MCF 10A (cell line): ENCODE measurements at regions of chr13 and their contacts with region 1.

Region 1: DNA sequence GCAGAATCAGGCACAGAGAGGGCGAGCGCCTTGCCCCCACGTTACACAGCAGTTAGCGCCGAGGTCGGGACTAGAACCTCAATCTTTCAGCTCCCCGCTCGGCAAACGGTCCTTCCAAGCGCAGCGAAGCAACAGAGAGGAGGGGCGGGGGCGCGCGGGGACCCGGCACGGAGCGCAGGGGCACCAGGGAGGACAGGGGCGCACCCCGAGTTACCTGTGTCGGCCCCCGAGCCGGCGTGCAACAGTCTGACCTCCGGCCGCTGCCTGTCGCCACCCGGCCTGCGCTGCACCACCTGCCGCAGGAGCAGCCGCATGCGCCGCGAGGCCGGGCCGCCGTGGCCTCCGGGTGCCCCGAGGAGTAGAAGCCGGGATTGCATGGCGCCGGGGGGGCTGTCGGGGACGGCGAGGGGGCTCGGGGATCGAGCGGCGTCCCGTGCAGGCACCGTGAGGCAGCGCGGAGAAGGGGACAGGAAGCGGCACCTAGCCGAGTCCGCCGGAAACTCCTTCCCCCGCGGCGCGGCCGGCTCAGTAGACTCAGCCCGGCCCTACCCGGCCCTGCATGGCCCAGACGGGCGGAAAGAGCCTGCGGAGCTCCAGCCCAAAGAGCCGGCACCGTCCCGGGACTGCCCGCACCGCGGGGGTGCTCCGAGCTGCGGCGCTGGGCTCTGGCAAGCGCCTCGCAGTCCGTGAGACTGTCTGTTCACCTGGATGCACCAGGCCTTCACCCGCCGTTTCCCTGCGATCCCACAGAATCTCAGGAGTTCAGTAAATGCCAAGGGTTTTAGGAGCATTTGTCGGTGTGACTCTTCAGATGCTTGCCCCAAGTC is at the start of gene VWA8:
- DNase-seq: peak; percentile 73
- H3K4me3 Mint-ChIP-seq: peak within 1 kb of the TSS; percentile 86
- H3K27ac Mint-ChIP-seq: peak within 1 kb of the TSS; percentile 90
- H3K4me1 Mint-ChIP-seq: peaks cover 23% of the 10 kb centered on the region
- H3K27me3 Mint-ChIP-seq: no peaks in the 10 kb centered on the region
- CTCF ChIP-seq: no peak
- total RNA-seq, gene VWA8: 20.1 and 21.4 TPM in 2 replicates

Region 2: GRCh38 chr13:41916173-41916954 is 44.5 kb before region 1 on chr13:
- CTCF ChIA-PET with region 1: interaction called, 3 read pairs
- POLR2A ChIA-PET with region 1: interaction called, 13 read pairs
- intact Hi-C with region 1: no loop called
- DNase-seq: peak; percentile 75
- H3K4me3 Mint-ChIP-seq: peak overlapping the region; percentile 41
- H3K27ac Mint-ChIP-seq: peak overlapping the region; percentile 90
- H3K4me1 Mint-ChIP-seq: peaks cover 17% of the 10 kb centered on the region
- H3K27me3 Mint-ChIP-seq: no peaks in the 10 kb centered on the region
- CTCF ChIP-seq: no peak

Region 3: DNA sequence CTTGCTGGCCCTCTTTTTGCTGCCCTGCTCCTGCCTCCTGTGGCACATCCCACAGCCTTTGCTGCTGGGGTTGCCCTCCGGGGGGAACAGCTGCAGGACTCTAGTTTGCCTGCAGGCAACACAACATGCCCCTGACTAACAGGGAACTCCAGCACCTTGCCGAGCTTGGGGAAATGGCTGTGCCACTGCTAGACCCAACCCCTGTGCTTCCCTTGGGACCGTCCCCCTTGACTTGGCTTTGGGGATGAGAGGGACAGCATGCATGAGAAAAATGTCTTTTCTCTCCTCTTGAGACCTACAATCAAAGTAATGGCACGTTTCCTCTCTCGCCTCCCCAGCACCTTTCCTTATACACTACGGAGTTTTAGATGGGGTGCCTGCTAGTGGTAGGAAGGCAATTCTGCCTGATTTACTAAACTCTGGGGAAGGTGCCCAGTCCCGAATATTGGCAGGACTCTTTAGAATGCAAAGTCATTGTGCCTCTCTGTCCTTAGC is 12.4 kb after region 1 on chr13:
- CTCF ChIA-PET with region 1: interaction called, 5 read pairs
- POLR2A ChIA-PET with region 1: interaction called, 51 read pairs
- intact Hi-C with region 1: no loop called
- DNase-seq: no peak
- H3K4me3 Mint-ChIP-seq: no peak overlapping the region
- H3K27ac Mint-ChIP-seq: no peak overlapping the region
- H3K4me1 Mint-ChIP-seq: peaks cover 9% of the 10 kb centered on the region
- H3K27me3 Mint-ChIP-seq: no peaks in the 10 kb centered on the region
- CTCF ChIP-seq: no peak

Region 4: DNA sequence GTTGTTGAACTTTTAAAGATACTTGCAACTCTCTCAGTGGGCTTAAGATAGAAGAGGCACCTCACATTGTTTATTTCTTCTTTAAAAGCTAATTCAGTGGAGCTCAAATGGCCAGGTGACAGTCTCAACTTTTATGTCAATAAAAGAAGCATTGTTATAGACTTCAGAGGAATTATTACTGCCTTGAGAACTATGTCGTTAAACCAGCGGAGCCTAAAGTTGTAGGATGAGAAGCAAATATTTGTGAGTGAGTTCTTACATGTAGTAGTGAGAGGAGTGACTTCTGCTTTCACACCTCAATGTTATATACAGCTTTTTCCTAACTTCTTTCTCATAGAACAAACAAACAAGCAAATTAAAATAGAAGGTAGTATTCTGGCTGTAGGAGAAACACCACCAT is 56.4 kb after region 1 on chr13:
- CTCF ChIA-PET with region 1: no interaction called
- POLR2A ChIA-PET with region 1: no interaction called
- intact Hi-C with region 1: no loop called
- DNase-seq: no peak
- H3K4me3 Mint-ChIP-seq: no peak overlapping the region
- H3K27ac Mint-ChIP-seq: no peak overlapping the region
- H3K4me1 Mint-ChIP-seq: no peaks in the 10 kb centered on the region
- H3K27me3 Mint-ChIP-seq: no peaks in the 10 kb centered on the region
- CTCF ChIP-seq: no peak

Region 5: DNA sequence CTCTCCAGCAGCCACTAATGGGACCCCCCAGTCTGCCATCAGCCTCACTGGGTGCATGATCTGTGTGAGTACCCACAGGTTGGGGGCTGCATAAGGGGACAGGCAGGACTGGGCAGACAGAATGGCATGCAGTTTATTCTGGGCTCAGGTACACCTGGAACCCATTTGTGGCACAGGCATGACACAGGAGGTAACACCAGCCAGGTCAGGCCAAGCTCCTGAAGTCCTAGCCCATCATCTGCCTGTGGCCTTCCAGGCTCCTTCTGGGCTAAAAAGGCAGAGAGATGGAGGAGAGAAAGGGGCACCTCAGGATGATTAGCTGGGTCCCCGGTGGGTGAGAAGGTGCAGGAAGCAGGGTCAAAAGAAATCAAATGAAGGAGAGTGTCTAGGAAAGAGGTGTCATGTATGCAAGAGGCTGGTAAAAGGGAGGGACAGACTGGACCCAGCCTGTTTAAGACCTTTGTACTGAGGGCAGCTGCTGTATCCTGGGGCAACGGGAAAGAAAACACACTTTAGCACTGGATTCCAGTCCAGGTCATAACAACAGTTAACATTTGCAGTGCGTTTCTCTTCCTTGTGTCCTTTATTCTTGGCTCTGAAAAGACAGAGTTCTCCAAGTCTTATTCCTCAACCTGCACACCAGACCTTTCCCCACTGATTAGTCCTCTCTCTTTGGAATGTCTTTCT is 67.4 kb after region 1 on chr13:
- CTCF ChIA-PET with region 1: interaction called, 3 read pairs
- POLR2A ChIA-PET with region 1: interaction called, 86 read pairs
- intact Hi-C with region 1: no loop called
- DNase-seq: no peak
- H3K4me3 Mint-ChIP-seq: no peak overlapping the region
- H3K27ac Mint-ChIP-seq: no peak overlapping the region
- H3K4me1 Mint-ChIP-seq: peaks cover 29% of the 10 kb centered on the region
- H3K27me3 Mint-ChIP-seq: no peaks in the 10 kb centered on the region
- CTCF ChIP-seq: no peak

Region 6: DNA sequence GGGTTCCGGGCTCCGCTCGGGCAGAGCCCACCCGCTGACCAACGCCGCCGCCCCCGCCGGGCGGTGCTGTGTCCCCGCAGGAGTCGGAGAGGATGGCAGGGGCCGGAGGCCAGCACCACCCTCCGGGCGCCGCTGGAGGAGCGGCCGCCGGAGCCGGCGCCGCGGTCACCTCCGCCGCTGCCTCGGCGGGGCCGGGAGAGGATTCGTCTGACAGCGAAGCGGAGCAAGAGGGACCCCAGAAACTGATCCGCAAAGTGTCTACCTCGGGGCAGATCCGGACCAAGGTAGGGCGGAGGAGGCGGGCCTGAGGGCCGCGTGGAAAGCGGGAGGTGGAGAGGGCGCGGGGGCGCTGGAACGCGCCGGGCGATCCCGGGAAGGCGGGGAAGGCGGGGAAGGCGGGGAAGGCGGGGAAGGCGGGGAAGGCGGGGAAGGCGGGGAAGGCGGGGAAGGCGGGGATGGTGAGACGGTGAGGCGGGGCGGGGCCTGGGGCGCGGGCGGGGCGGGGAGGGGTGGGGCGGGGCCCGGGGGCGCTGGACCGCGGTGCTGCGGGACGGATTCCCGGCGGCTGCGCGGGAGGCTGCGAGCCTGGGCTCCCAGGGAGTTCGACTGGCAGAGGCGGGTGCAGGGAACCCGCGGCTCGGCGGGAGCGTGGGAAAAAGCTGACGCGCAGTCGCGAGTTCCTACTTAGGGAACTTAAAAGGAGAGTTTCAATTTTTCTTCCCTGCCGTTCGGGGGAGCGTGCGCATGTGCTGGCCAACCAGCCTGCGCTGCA is 88.0 kb after region 1 on chr13:
- CTCF ChIA-PET with region 1: interaction called, 4 read pairs
- POLR2A ChIA-PET with region 1: interaction called, 96 read pairs
- intact Hi-C with region 1: no loop called
- DNase-seq: peak; percentile 76
- H3K4me3 Mint-ChIP-seq: peak overlapping the region; percentile 93
- H3K27ac Mint-ChIP-seq: peak overlapping the region; percentile 51
- H3K4me1 Mint-ChIP-seq: peaks cover 6% of the 10 kb centered on the region
- H3K27me3 Mint-ChIP-seq: no peaks in the 10 kb centered on the region
- CTCF ChIP-seq: peak; percentile 17